Activated naive CD8-positive, alpha-beta T cell treated with anti-CD3 and anti-CD28 coated beads, Interleukin-2, amount 10 ng/mL, durations not matched to agents 7 days and 5 days (primary cell): ENCODE measurements at regions of chr12 and their contacts with region 1.

Region 1: DNA sequence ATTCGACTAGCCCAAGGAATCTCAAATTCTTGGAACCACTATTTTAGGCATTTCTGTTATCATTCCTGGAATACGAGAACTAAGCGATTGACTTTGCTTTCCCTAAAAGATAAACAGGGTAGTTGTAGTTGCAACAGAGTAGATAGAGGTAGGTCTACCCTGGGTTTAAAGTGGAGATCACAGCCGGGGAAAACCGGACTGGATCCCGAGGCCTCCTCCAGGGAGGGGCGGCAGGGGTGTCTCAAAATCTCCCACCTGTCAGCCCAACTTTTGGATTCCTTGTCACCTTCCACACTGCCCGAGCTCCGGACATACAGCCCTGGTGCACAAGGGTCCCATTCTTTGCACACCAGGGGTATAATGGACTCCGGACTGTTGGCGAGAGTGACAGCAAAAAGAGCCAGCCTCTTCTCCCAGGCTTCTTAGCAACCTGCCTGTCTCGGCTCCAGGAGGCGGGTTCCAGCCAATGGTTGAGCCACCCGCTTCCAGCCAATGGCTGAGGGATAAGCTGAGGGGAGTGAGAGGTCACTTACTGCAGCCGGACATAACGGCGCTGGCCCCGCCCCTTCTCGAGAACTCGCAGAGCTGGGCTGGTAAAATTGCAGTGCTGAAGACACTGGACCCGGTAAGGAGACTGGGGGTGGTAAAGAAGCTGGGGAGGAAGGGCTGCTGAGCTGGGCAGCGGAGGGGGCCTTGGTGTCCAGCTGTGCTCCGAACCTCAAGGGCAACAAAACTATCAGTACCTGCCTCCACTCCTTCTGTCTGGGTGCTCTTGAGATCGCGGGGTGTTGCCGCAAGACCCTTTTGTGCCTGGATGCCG is at the start of gene SUOX:
- DNase-seq: peak; percentile 55
- ATAC-seq: peak; percentile 87
- H3K4me3 Mint-ChIP-seq: peak within 1 kb of the TSS; percentile 86
- H3K27ac Mint-ChIP-seq: peak within 1 kb of the TSS; percentile 56
- H3K4me1 Mint-ChIP-seq: peaks cover 21% of the 10 kb centered on the region
- H3K27me3 Mint-ChIP-seq: peaks cover 2% of the 10 kb centered on the region
- total RNA-seq, gene SUOX: 8.1 to 11.4 TPM

Region 2: DNA sequence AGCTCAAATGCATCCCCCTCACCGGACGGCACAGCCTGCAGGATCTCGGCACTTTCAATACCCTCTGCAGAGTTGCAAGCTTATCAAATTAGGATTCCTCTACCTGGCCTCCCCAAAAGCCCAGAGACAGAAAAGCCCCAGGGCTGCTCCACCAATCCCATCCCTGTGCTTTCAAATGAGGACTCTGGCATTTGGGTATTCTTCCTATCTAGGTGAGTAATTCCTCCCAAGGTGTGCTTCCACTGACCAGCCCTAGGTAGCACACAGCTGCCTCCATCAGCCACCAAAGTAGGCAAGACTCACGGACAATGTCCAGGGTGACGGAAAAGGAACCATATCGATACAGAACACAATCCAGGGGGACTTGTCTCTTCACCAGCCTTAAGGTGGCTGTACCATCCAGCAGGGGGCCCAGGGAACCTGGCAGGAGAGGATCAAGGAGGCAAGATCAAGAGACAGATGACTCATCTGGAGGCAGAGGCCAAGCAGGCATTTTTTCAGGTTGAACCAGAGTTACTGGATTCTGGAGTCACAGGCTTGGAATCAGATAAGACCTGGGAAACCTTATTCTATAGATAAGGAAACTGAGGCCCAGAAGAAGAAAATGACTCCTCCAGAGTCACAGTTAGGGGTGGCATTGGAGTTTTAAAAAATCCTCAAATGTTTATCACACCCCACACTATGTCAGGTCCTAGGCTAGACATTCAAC is 41.0 kb before region 1 on chr12:
- POLR2A ChIA-PET with region 1: no interaction called
- DNase-seq: peak; percentile 48
- ATAC-seq: peak; percentile 69
- H3K4me3 Mint-ChIP-seq: no peak overlapping the region
- H3K27ac Mint-ChIP-seq: peak overlapping the region; percentile 2
- H3K4me1 Mint-ChIP-seq: peaks cover 13% of the 10 kb centered on the region
- H3K27me3 Mint-ChIP-seq: no peaks in the 10 kb centered on the region

Region 3: DNA sequence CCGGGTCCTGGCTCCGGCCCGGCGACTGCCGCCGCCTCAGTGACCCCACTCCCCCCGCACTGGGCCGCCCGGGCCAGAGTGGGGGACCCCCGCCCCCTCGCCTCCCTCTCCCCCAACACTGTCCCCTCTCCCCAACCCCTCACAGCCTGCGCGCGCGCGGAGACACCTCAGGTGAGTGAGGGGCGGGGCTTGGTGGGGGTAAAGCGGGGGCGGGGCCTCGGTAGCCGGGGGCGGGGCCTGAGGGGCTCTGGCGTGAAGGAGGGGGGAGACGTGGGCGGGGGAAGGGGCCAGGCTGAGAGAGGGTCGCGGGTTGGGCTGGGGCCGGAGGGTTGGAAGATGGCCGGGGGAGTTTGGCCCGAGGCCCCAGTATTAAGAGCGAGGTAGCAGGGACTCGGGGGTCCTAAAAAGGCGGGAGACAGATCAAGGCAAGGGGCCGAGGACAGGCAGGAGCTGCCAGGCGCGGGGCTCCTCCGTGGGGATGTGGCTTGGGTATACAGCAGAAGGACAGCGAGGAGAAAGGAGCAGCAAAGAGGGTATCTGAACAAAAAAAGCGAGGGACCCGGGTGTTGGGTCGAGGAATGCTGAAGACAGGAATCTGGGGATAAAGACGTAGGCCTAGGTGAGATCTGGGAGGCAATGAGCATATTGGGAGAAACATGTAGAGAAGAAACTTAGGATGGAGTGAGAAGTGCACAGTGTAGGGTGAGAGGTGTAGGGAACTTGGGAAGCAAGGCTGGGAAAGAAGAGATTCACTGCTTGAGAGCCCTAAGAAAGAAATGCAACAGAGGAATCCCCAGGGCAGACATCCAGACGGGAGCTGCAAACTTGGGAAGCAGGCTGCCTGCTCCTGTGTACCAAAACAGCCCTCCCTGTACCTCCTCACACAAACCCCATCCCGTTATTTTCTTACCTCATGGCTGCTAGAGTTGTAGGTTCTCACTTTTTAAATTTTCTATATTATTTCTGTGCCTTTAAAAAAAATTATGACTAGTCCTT is 10.9 kb after region 1 on chr12:
- POLR2A ChIA-PET with region 1: interaction called, 15 read pairs
- DNase-seq: peak; percentile 79
- ATAC-seq: peak; percentile 79
- H3K4me3 Mint-ChIP-seq: peak overlapping the region; percentile 86
- H3K27ac Mint-ChIP-seq: peak overlapping the region; percentile 85
- H3K4me1 Mint-ChIP-seq: peaks cover 22% of the 10 kb centered on the region
- H3K27me3 Mint-ChIP-seq: no peaks in the 10 kb centered on the region

Region 4: GRCh38 chr12:56020423-56021184 is 23.7 kb after region 1 on chr12 and contains the start of gene IKZF4:
- POLR2A ChIA-PET with region 1: interaction called, 15 read pairs
- DNase-seq: peak; percentile 42
- ATAC-seq: peak; percentile 17
- H3K4me3 Mint-ChIP-seq: peak within 1 kb of the TSS; percentile 93
- H3K27ac Mint-ChIP-seq: peak within 1 kb of the TSS; percentile 96
- H3K4me1 Mint-ChIP-seq: peaks cover 42% of the 10 kb centered on the region
- H3K27me3 Mint-ChIP-seq: no peaks in the 10 kb centered on the region
- total RNA-seq, gene IKZF4: 14.9 to 18.2 TPM

Region 5: DNA sequence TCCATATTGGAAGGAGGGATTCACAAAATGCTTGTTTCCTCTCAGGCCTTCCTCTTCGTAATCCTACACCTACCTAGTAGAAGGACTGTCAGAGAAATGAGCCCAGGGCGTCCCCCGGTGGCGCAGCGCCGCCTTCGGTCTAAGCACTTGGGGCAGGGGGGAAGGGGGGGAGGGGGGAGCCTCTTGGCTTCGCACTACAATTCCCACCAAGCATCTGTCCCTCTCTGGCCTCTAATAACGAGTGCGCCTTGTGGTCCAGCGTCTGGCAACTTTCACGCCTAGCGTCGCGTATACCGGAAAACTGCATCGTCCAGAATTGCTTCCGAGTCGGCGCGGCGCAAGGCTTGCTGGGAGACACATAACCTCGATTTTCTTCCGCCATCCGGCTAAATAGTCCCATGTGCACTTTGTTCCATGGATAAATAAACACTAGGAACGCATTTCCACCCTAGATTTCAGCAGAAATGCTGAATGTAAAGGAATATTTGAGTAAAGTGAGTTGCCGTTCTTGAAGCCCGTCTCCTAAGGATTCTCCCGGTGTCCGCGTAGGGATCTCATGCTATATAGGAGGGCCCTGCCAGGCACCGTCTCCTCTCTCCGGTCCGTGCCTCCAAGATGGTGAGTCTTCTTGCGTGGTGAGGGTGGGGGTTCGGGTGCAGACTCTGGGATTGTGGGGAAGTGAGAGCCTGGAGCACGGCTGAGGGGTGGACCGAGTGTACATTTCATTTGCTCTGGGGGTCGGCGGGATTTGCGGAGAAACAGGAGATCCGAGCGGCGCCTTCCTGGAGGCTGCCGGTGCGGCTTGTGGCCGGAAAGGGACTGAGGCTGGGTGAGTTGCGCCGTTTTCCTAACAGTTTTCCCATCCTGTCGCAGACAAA is 44.9 kb after region 1 on chr12 and contains the start of gene RPS26:
- POLR2A ChIA-PET with region 1: interaction called, 18 read pairs
- DNase-seq: peak; percentile 85
- ATAC-seq: peak; percentile 94
- H3K4me3 Mint-ChIP-seq: peak within 1 kb of the TSS; percentile 93
- H3K27ac Mint-ChIP-seq: peak within 1 kb of the TSS; percentile 94
- H3K4me1 Mint-ChIP-seq: peaks cover 33% of the 10 kb centered on the region
- H3K27me3 Mint-ChIP-seq: no peaks in the 10 kb centered on the region
- total RNA-seq, gene RPS26: 39.1 to 42.6 TPM

Region 6: GRCh38 chr12:56098592-56098991 is 101.7 kb after region 1 on chr12:
- POLR2A ChIA-PET with region 1: no interaction called
- DNase-seq: no peak
- ATAC-seq: no peak
- H3K4me3 Mint-ChIP-seq: no peak overlapping the region
- H3K27ac Mint-ChIP-seq: no peak overlapping the region
- H3K4me1 Mint-ChIP-seq: peaks cover 24% of the 10 kb centered on the region
- H3K27me3 Mint-ChIP-seq: peaks cover 14% of the 10 kb centered on the region